GM12878 (cell line): ENCODE measurements at regions of chr13 and their contacts with region 1.

Region 1: GRCh38 chr13:60838581-60838980 is 441.6 kb downstream of the TDRD3 start:
- DNase-seq: no peak
- ATAC-seq: no peak
- H3K4me3 ChIP-seq: no peak overlapping the region
- H3K27ac ChIP-seq: no peak overlapping the region
- H3K4me1 ChIP-seq: no peaks in the 10 kb centered on the region
- H3K27me3 ChIP-seq: no peaks in the 10 kb centered on the region
- CTCF ChIP-seq: no peak
- EP300 ChIP-seq: no peak
- POLR2A ChIP-seq: no peak
- RAD21 ChIP-seq: no peak

Region 2: GRCh38 chr13:60862036-60862435 is 23.5 kb after region 1 on chr13:
- CTCF ChIA-PET with region 1: no interaction called
- POLR2A ChIA-PET with region 1: no interaction called
- RAD21 ChIA-PET with region 1: no interaction called
- SMC1A ChIA-PET with region 1: no interaction called
- in situ Hi-C with region 1: no loop called
- intact Hi-C with region 1: loop called (anchors 2 kb)
- DNase-seq: no peak
- ATAC-seq: no peak
- H3K4me3 ChIP-seq: no peak overlapping the region
- H3K27ac ChIP-seq: no peak overlapping the region
- H3K4me1 ChIP-seq: no peaks in the 10 kb centered on the region
- H3K27me3 ChIP-seq: no peaks in the 10 kb centered on the region
- CTCF ChIP-seq: no peak
- EP300 ChIP-seq: no peak
- POLR2A ChIP-seq: no peak
- RAD21 ChIP-seq: no peak